Sigmoid colon (tissue), 7 donors: ENCODE measurements at regions of chr5 and their contacts with region 1.

Region 1: DNA sequence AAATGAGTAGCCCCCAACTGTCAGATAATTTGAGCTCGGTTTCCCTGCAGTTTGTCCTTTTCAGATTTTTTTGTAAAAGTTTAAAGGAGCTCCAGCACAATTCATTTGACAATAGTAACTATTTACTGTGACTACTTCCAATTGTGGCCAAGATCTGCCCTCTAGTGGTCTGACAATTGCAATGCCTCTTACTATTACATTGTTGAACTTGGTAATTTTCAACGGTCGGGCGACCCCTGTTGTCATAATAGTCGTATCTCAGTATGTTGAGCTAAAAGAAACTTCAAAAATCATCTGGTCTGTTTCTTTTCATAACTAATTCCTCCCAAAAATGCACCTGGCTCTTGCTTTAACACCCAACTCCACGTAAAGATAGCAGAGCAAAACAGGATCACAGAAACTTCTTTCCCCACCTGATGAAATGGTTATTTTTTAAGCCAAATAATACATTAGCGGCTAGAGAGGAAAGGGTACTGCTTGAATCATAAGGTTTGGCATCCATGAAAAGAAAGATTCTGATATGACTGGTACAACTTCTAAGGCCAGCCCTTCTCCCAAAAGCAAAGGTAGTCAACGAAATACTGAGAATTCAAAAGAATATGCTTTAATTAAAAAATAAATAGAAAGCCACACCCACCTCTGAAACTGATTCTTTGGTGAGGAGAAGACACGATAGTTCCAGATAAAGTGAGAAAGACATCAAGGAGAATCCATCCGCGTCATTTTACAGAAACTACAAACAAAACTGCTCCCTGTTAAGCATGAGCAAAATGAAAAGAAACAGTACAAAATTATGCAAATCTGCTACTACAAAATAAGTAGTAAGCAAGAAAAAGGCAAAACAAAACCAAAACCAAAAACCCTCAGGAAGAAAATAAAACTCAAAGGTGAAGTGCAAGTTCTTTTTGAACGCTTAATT is 76.9 kb upstream of the HTR4 start:
- DNase-seq: peak; percentile 89
- H3K4me3 ChIP-seq: no peak overlapping the region
- H3K27ac ChIP-seq: peak overlapping the region in 3 of 4 donors; percentile 26 to 49 (median 34)
- H3K4me1 ChIP-seq: peaks cover 0 to 31% (median 23%) of the 10 kb centered on the region in 4 donors
- H3K27me3 ChIP-seq: no peaks in the 10 kb centered on the region
- CTCF ChIP-seq: peak; percentile 90 to 95 (median 93)
- EP300 ChIP-seq: no peak
- POLR2A ChIP-seq: no peak

Region 2: GRCh38 chr5:148179234-148179824 is 551.9 kb before region 1 on chr5:
- intact Hi-C with region 1: loop called (anchors 1 kb)
- DNase-seq: no peak
- H3K4me3 ChIP-seq: no peak overlapping the region
- H3K27ac ChIP-seq: no peak overlapping the region
- H3K4me1 ChIP-seq: peaks cover 0 to 11% (median 2%) of the 10 kb centered on the region in 4 donors
- H3K27me3 ChIP-seq: no peaks in the 10 kb centered on the region
- CTCF ChIP-seq: peak; percentile 42 to 73 (median 54)
- EP300 ChIP-seq: no peak
- POLR2A ChIP-seq: no peak

Region 3: GRCh38 chr5:148443998-148444397 is 287.2 kb before region 1 on chr5:
- intact Hi-C with region 1: loop called (anchors 1 kb)
- DNase-seq: peak; percentile 66
- H3K4me3 ChIP-seq: no peak overlapping the region
- H3K27ac ChIP-seq: no peak overlapping the region
- H3K4me1 ChIP-seq: peaks cover 0 to 21% (median 0%) of the 10 kb centered on the region in 4 donors
- H3K27me3 ChIP-seq: no peaks in the 10 kb centered on the region
- CTCF ChIP-seq: peak; percentile 59 to 78 (median 65)
- EP300 ChIP-seq: no peak
- POLR2A ChIP-seq: no peak

Region 4: DNA sequence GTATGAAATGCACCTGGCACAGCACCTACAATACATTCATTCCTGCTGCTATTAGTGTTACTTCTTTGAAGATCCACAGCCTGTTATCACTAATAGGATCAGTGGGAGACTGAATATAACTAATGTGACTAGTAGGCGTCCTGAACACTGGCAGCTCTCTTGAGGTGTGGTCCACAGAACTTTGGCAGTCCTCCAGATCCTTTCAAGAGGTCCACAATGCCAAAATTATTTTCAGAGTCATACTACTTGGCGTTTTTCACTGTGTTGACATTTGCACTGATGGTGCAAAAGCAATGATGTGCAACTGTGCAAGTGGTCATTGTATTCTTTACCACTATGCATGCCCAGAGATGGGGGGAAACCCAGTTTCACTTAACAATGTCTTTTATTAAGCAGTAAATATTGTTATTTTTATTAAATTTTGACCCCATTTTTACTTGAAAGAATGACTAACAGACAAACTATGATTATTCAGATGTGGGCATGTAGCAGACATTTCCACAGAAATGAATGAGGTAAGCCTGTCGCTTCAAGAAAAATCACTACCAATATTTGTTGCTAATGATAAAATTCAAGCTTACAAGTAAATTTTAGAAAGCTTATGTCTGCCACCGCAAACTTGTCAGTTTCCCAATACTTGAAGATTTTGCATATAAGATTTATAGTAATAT is 144.1 kb after region 1 on chr5:
- intact Hi-C with region 1: no loop called
- DNase-seq: no peak
- H3K4me3 ChIP-seq: no peak overlapping the region
- H3K27ac ChIP-seq: no peak overlapping the region
- H3K4me1 ChIP-seq: peaks cover 0 to 13% (median 7%) of the 10 kb centered on the region in 4 donors
- H3K27me3 ChIP-seq: no peaks in the 10 kb centered on the region
- CTCF ChIP-seq: no peak
- EP300 ChIP-seq: no peak
- POLR2A ChIP-seq: no peak

Region 5: DNA sequence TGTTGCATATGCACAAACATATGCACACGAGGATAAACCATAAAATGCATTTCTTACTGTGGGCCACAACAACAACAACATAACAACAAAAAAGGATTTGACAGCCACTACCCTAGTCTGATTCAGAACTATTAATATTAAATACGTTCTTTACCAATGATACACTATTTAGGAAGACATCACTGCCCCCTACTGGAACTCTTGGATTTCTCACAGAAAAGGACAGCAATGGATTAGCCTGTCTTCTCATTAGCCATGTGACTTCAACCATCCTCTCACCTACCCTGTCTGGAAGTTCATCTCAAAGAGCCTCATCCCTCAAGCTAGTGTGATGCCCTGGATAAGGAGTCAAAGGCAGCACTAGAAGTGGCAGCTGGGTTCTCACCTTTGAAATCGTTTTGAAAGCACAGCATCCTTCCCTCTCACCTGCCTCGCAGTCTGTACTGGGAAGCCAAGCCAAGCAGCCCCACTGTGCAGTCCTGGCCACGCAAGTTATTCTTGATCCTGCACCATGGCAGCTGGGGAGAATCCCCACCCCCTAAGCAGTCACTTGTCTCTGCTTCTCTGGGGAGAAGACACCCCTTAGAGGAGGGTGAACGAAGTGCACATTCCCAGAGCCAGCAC is 267.1 kb after region 1 on chr5:
- intact Hi-C with region 1: loop called (anchors 2 kb)
- DNase-seq: no peak
- H3K4me3 ChIP-seq: no peak overlapping the region
- H3K27ac ChIP-seq: no peak overlapping the region
- H3K4me1 ChIP-seq: peaks cover 0 to 25% (median 18%) of the 10 kb centered on the region in 4 donors
- H3K27me3 ChIP-seq: no peaks in the 10 kb centered on the region
- CTCF ChIP-seq: peak in 3 of 4 experiments; percentile 42 to 73 (median 64)
- EP300 ChIP-seq: no peak
- POLR2A ChIP-seq: no peak

Region 6: DNA sequence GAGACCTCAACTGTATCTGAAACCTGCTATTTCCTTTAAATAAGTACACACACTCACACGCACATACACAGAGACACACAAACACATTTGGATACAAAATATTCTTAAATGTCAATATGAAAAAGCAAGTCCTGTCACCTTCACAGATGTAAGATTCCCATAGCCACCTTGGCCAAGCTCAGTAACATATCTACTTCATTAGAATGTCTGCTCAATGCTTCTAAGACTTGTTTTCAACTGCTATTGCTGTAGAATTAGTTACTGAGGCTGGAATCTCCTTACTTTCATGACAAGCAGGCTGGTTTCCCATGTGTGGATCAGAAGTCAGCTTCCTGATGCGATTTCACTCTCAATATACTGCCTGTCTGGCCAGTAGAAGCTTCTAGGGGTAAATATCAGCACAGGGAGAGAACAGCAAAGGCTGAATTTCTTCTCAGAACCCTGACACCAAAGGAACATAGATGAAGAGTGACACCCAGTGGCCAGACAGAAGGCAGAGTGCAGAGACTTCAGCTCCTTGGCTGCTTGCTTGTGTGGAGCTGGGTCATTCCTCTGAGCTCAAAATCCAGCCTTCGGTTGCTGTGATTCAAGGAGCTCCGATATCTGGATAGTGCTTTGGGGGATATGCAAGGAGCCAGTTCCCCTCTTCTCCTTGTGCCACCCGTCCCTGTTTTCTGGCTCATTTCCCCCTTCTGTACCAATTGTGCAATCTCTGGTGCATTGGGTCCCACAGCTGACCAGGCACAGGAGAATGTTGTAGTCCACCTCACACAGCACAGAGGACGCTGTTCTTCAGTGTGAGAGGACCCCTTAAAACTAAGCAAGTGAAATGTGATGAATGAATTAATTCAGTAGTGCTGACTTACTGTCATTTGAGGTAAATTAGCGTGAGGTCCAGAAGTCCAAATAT is 383.5 kb after region 1 on chr5:
- intact Hi-C with region 1: loop called (anchors 2 kb)
- DNase-seq: peak; percentile 68
- H3K4me3 ChIP-seq: no peak overlapping the region
- H3K27ac ChIP-seq: no peak overlapping the region
- H3K4me1 ChIP-seq: peaks cover 0 to 4% (median 0%) of the 10 kb centered on the region in 4 donors
- H3K27me3 ChIP-seq: no peaks in the 10 kb centered on the region
- CTCF ChIP-seq: peak in 3 of 4 experiments; percentile 53 to 57 (median 56)
- EP300 ChIP-seq: no peak
- POLR2A ChIP-seq: no peak